ENCODE measurements at regions of chr9 and their contacts with region 1.

Region 1: GRCh38 chr9:72280913-72281500 is 84.0 kb downstream of the ZFAND5 start:
- DNase-seq: peak; percentile 78
- H3K4me3 ChIP-seq: no peak overlapping the region
- H3K27ac ChIP-seq: no peak overlapping the region
- H3K4me1 ChIP-seq: no peaks in the 10 kb centered on the region
- H3K27me3 ChIP-seq: no peaks in the 10 kb centered on the region; the same call in 1 of the 2 replicates

Region 2: GRCh38 chr9:72454871-72455491 is 174.0 kb after region 1 on chr9:
- in situ Hi-C with region 1: no loop called
- DNase-seq: no peak
- H3K4me3 ChIP-seq: no peak overlapping the region
- H3K27ac ChIP-seq: no peak overlapping the region
- H3K4me1 ChIP-seq: no peaks in the 10 kb centered on the region
- H3K27me3 ChIP-seq: no peaks in the 10 kb centered on the region

Region 3: DNA sequence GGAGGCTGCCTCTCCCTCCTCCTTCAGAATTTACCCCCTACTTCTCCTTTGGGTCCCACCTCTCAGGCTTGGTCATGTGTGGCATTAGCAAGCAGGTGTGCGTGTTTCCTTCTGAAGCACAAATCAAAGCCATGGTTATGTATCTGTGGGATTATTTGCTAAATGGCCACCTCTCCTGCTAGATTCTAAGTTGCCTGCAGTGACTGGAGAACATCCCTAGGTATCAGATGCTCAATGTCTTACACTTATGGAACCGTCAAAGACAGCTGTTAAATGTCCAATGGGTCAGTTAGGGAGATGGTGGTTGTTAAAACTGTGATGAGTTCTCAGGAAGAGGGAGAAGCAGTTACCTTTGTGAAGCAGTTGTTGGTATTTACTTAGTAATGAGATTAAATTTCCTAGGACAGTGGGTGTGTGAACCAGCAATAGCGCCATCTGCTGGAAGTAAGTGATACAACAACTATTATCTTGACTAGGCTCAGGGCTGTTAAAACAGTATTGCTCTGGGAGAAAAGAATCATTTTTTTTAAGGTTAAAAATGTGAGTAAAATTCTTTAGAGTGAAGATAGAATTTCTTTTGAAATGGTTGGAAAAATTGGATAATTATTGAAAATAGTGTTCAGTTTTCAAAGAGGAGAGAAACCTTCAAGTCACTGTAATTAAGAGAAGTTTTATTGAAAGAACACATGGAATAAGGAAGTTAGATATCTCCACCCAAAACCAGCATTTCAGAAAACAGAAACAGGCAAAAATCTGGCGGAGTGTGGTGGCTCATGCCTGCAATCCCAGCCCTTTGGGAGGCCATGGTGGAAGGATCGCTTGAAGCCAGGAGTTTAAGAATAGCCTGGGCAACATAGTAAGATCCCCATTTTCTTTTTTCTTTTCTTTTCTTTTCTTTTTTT is 311.7 kb after region 1 on chr9:
- in situ Hi-C with region 1: loop called (anchors 5 kb)
- DNase-seq: peak; percentile 74
- H3K4me3 ChIP-seq: no peak overlapping the region
- H3K27ac ChIP-seq: no peak overlapping the region
- H3K4me1 ChIP-seq: peaks cover 20% of the 10 kb centered on the region
- H3K27me3 ChIP-seq: no peaks in the 10 kb centered on the region

Region 4: GRCh38 chr9:72827950-72828731 is 547.1 kb after region 1 on chr9:
- in situ Hi-C with region 1: loop called (anchors 10 kb)
- DNase-seq: peak; percentile 11
- H3K4me3 ChIP-seq: no peak overlapping the region
- H3K27ac ChIP-seq: no peak overlapping the region
- H3K4me1 ChIP-seq: no peaks in the 10 kb centered on the region
- H3K27me3 ChIP-seq: 0 out of 2 replicates have a peak, but pooled peaks cover under 1% of the 10 kb centered on the region

Region 5: GRCh38 chr9:73038613-73039012 is 757.6 kb after region 1 on chr9:
- in situ Hi-C with region 1: loop called (anchors 25 kb)
- DNase-seq: peak; percentile 44
- H3K4me3 ChIP-seq: no peak overlapping the region
- H3K27ac ChIP-seq: no peak overlapping the region
- H3K4me1 ChIP-seq: peaks cover 16% of the 10 kb centered on the region
- H3K27me3 ChIP-seq: peaks cover 6% of the 10 kb centered on the region; the same call in 1 of the 2 replicates